ENCODE measurements at regions of chr17 and their contacts with region 1.

Region 1: DNA sequence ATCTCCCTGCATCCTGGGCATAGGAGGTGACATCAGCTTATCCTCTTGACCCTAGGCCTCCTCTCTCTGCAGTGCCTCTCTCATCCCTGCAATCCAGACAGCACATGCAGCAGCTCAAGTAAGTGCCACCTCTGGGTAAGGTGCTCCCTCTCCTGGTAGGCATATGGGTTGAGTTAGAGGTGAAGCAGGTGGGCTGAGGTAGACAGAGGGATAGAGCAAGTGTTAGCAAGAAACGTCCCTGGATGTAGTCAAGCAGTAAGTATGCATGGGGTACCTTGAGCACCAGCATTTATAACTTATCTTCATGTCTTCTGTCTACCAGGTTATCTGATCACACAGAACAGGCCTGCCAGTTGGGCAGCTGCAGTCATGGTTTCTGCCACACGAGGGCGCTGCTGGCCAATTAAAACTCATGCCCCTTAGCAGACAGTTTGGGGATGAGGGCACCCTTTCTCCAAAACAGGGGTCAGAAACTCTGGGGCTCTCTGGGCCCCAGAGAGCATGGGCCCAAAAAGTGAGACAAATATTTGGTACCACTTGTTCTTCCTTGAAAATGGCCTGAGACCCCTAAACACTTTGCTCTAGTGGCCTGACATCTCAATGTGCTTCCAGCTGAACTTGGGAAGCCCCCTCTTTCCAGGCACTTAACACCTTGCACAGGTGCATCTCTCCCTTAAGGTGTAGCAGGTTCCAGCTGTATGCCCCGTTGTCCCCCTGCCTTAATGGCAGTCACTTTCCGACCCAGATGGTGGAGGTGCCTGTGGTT is 59.8 kb downstream of the NEUROD2 start:
- DNase-seq: peak; percentile 96
- H3K4me3 Mint-ChIP-seq: no peak overlapping the region
- H3K27ac Mint-ChIP-seq: no peak overlapping the region
- H3K4me1 Mint-ChIP-seq: peaks cover 12% of the 10 kb centered on the region
- H3K27me3 Mint-ChIP-seq: no peaks in the 10 kb centered on the region
- CTCF ChIP-seq: peak; percentile 100

Region 2: GRCh38 chr17:39209317-39210092 is 338.4 kb before region 1 on chr17:
- CTCF ChIA-PET with region 1: interaction called, 32 read pairs
- intact Hi-C with region 1: loop called (anchors 2 kb)
- DNase-seq: peak; percentile 81
- H3K4me3 Mint-ChIP-seq: peak overlapping the region; percentile 55
- H3K27ac Mint-ChIP-seq: peak overlapping the region; percentile 16
- H3K4me1 Mint-ChIP-seq: peaks cover 43% of the 10 kb centered on the region
- H3K27me3 Mint-ChIP-seq: peaks cover 63% of the 10 kb centered on the region
- CTCF ChIP-seq: peak; percentile 13

Region 3: GRCh38 chr17:39270923-39271322 is 277.0 kb before region 1 on chr17:
- CTCF ChIA-PET with region 1: interaction called, 3 read pairs
- intact Hi-C with region 1: loop called (anchors 5 kb)
- DNase-seq: peak; percentile 72
- H3K4me3 Mint-ChIP-seq: no peak overlapping the region
- H3K27ac Mint-ChIP-seq: peak overlapping the region; percentile 26
- H3K4me1 Mint-ChIP-seq: no peaks in the 10 kb centered on the region
- H3K27me3 Mint-ChIP-seq: no peaks in the 10 kb centered on the region
- CTCF ChIP-seq: peak; percentile 58

Region 4: GRCh38 chr17:39410279-39410678 is 137.6 kb before region 1 on chr17:
- CTCF ChIA-PET with region 1: no interaction called
- intact Hi-C with region 1: no loop called
- DNase-seq: no peak
- H3K4me3 Mint-ChIP-seq: no peak overlapping the region
- H3K27ac Mint-ChIP-seq: no peak overlapping the region
- H3K4me1 Mint-ChIP-seq: peaks cover 5% of the 10 kb centered on the region
- H3K27me3 Mint-ChIP-seq: no peaks in the 10 kb centered on the region
- CTCF ChIP-seq: no peak

Region 5: DNA sequence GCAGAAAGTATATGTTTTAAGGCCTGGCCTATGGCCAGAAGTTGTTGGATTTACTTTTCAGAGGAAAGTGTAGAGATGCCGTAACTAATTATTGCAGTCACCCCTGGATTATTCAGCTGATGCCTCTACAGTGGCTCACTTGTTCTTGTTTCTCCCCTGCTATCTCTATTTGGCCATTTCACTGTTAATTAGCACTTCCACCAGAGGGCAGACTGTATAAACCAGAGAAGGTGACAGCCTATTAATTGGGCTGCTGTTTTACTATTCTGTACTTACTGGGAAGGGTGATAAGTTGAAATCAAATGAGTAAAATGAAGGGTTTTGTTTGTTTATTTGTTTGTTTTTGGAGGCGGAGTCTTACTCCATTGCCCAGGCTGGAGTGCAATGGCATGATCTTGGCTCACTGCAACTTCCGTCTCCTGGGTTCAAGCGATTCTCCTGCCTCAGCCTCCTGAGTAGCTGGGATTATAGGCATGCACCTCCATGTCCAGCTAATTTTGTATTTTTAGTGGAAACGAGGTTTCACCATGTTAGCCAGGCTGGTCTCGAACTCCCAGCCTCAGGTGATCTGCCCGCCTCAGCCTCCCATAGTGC is 20.6 kb before region 1 on chr17:
- CTCF ChIA-PET with region 1: interaction called, 28 read pairs
- intact Hi-C with region 1: loop called (anchors 1 kb)
- DNase-seq: peak; percentile 72
- H3K4me3 Mint-ChIP-seq: no peak overlapping the region
- H3K27ac Mint-ChIP-seq: no peak overlapping the region
- H3K4me1 Mint-ChIP-seq: no peaks in the 10 kb centered on the region
- H3K27me3 Mint-ChIP-seq: no peaks in the 10 kb centered on the region
- CTCF ChIP-seq: peak; percentile 97

Region 6: GRCh38 chr17:39536468-39536867 is 11.4 kb before region 1 on chr17:
- CTCF ChIA-PET with region 1: interaction called, 14 read pairs
- intact Hi-C with region 1: no loop called
- DNase-seq: no peak
- H3K4me3 Mint-ChIP-seq: no peak overlapping the region
- H3K27ac Mint-ChIP-seq: no peak overlapping the region
- H3K4me1 Mint-ChIP-seq: peaks cover 28% of the 10 kb centered on the region
- H3K27me3 Mint-ChIP-seq: no peaks in the 10 kb centered on the region
- CTCF ChIP-seq: no peak

Region 7: DNA sequence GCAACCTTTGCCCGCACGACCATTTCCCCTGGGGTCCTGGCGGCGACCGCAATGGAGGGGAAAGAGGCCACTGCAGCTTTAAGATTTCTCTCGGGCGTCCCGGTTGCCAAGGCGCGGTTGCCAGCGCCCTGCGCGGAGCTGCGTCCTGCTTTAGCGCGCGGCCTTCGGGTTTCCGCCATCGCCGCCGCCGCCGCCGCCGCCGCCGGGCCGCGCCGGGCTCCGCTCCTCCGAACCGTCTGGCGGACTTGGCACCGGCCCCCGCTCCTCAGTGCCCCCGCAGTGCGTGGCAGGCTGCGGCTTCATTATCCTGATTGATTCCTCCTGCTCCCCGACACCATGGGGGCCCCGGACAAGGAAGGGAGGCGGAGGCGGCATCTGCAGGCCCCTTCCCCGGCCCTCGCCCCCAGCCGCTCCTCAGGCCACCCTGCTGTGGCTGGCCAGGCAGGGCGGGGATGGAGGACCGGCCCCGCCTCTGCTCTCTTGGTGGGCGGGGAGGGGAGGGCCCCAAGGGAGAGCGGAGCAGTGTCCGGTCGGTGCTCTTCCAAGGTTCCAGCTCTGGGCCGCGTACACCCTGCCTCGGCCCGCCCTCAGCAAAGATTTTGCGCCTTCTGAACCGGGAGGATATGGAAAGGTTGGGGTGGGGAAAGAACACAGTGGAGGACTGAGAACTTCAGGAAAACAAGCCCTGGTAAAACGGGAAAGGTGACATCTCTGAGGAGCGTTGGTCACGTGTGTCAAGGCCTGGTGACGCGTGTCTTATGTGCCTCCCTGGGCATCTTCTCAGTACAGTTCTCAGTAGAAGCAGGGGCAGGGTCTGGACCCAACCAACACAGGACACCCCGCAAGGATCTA is 25.8 kb after region 1 on chr17:
- CTCF ChIA-PET with region 1: interaction called, 29 read pairs
- intact Hi-C with region 1: no loop called
- DNase-seq: peak; percentile 93
- H3K4me3 Mint-ChIP-seq: peak overlapping the region; percentile 81
- H3K27ac Mint-ChIP-seq: peak overlapping the region; percentile 74
- H3K4me1 Mint-ChIP-seq: peaks cover 7% of the 10 kb centered on the region
- H3K27me3 Mint-ChIP-seq: peaks cover 29% of the 10 kb centered on the region
- CTCF ChIP-seq: no peak

Region 8: DNA sequence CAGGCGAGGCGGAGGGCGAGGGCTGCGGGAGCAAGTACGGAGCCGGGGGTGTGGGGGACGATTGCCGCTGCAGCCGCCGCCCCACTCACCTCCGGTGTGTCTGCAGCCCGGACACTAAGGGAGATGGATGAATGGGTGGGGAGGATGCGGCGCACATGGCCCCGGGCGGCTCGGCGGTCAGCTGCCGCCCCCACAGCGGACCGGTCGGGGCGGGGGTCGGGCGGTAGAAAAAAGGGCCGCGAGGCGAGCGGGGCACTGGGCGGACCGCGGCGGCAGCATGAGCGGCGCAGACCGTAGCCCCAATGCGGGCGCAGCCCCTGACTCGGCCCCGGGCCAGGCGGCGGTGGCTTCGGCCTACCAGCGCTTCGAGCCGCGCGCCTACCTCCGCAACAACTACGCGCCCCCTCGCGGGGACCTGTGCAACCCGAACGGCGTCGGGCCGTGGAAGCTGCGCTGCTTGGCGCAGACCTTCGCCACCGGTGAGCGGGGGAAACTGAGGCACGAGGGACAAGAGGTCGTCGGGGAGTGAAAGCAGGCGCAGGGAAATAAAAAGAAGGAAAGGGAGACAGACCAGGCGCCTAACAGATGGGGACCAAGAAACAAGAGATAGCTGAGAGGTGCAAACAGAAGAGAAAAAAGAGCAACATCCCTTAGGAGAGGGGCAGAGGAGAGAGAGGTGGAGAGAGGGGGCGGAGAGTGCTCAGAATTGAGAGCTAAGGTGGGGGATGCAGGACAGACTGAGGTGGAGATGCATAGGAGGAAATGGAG is 120.5 kb after region 1 on chr17 and contains the start of gene PNMT:
- CTCF ChIA-PET with region 1: interaction called, 14 read pairs
- intact Hi-C with region 1: no loop called
- DNase-seq: peak; percentile 100
- H3K4me3 Mint-ChIP-seq: peak within 1 kb of the TSS; percentile 24
- H3K27ac Mint-ChIP-seq: peak within 1 kb of the TSS; percentile 0
- H3K4me1 Mint-ChIP-seq: peaks cover 65% of the 10 kb centered on the region
- H3K27me3 Mint-ChIP-seq: peaks cover 69% of the 10 kb centered on the region
- CTCF ChIP-seq: no peak
- total RNA-seq, gene PNMT: 1.3 and 3.2 TPM in 2 replicates